ENCODE measurements at regions of chr14 and their contacts with region 1.

Region 1: GRCh38 chr14:35416108-35416750 is 11.7 kb upstream of the NFKBIA start:
- DNase-seq: peak in 8 of 9 experiments; percentile 35 to 94 (median 62)
- ATAC-seq: peak; percentile 48
- H3K4me3 ChIP-seq: peak overlapping the region; percentile 9 to 15
- H3K4me3 Mint-ChIP-seq: peak overlapping the region; percentile 55
- H3K27ac ChIP-seq: peak overlapping the region; percentile 17 to 85
- H3K27ac Mint-ChIP-seq: peak overlapping the region; percentile 90
- H3K4me1 ChIP-seq: peaks cover 35% of the 10 kb centered on the region
- H3K4me1 Mint-ChIP-seq: peaks cover 44% of the 10 kb centered on the region
- H3K27me3 ChIP-seq: no peaks in the 10 kb centered on the region
- H3K27me3 Mint-ChIP-seq: no peaks in the 10 kb centered on the region
- CTCF ChIP-seq: no peak

Region 2: DNA sequence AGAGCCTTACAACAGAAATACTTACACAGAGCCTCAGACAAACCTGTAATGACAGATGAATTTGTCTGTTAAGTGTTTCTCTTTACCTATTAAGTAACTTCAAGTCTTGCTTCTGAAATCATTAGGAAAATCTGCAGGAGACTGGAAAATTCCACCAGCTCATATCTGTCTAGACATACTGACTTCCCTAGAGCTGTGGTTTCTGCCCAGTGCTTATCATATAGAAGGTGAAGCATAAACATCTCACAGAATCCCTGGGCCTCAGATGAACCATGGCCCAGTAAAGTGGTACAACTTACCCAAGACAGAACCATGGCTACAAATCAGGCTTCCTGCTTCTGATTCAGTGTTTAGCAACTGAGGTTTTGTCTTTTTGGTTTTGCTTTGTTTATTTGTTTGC is 1556.9 kb before region 1 on chr14:
- CTCF ChIA-PET with region 1: no interaction called
- POLR2A ChIA-PET with region 1: no interaction called
- intact Hi-C with region 1: no loop called
- DNase-seq: no peak
- ATAC-seq: no peak
- H3K4me3 ChIP-seq: no peak overlapping the region
- H3K4me3 Mint-ChIP-seq: no peak overlapping the region
- H3K27ac ChIP-seq: no peak overlapping the region
- H3K27ac Mint-ChIP-seq: no peak overlapping the region
- H3K4me1 ChIP-seq: no peaks in the 10 kb centered on the region
- H3K4me1 Mint-ChIP-seq: no peaks in the 10 kb centered on the region
- H3K27me3 ChIP-seq: no peaks in the 10 kb centered on the region
- H3K27me3 Mint-ChIP-seq: no peaks in the 10 kb centered on the region
- CTCF ChIP-seq: no peak

Region 3: GRCh38 chr14:34331728-34332623 is 1084.3 kb before region 1 on chr14:
- CTCF ChIA-PET with region 1: interaction called, 3 read pairs
- POLR2A ChIA-PET with region 1: no interaction called
- intact Hi-C with region 1: loop called (anchors 5 kb)
- DNase-seq: peak; percentile 29 to 68 (median 48)
- ATAC-seq: peak; percentile 64
- H3K4me3 ChIP-seq: no peak overlapping the region
- H3K4me3 Mint-ChIP-seq: no peak overlapping the region
- H3K27ac ChIP-seq: no peak overlapping the region
- H3K27ac Mint-ChIP-seq: no peak overlapping the region
- H3K4me1 ChIP-seq: no peaks in the 10 kb centered on the region
- H3K4me1 Mint-ChIP-seq: peaks cover 10% of the 10 kb centered on the region
- H3K27me3 ChIP-seq: no peaks in the 10 kb centered on the region
- H3K27me3 Mint-ChIP-seq: no peaks in the 10 kb centered on the region
- CTCF ChIP-seq: peak; percentile 64

Region 4: GRCh38 chr14:34722717-34723545 is 693.3 kb before region 1 on chr14:
- CTCF ChIA-PET with region 1: no interaction called
- POLR2A ChIA-PET with region 1: no interaction called
- intact Hi-C with region 1: loop called in 1 of 2 experiments (anchors 5 kb)
- DNase-seq: peak in 7 of 9 experiments; percentile 16 to 69 (median 34)
- ATAC-seq: peak; percentile 62
- H3K4me3 ChIP-seq: no peak overlapping the region
- H3K4me3 Mint-ChIP-seq: no peak overlapping the region
- H3K27ac ChIP-seq: no peak overlapping the region
- H3K27ac Mint-ChIP-seq: no peak overlapping the region
- H3K4me1 ChIP-seq: no peaks in the 10 kb centered on the region
- H3K4me1 Mint-ChIP-seq: peaks cover 2% of the 10 kb centered on the region
- H3K27me3 ChIP-seq: no peaks in the 10 kb centered on the region
- H3K27me3 Mint-ChIP-seq: peaks cover 2% of the 10 kb centered on the region
- CTCF ChIP-seq: peak; percentile 72

Region 5: DNA sequence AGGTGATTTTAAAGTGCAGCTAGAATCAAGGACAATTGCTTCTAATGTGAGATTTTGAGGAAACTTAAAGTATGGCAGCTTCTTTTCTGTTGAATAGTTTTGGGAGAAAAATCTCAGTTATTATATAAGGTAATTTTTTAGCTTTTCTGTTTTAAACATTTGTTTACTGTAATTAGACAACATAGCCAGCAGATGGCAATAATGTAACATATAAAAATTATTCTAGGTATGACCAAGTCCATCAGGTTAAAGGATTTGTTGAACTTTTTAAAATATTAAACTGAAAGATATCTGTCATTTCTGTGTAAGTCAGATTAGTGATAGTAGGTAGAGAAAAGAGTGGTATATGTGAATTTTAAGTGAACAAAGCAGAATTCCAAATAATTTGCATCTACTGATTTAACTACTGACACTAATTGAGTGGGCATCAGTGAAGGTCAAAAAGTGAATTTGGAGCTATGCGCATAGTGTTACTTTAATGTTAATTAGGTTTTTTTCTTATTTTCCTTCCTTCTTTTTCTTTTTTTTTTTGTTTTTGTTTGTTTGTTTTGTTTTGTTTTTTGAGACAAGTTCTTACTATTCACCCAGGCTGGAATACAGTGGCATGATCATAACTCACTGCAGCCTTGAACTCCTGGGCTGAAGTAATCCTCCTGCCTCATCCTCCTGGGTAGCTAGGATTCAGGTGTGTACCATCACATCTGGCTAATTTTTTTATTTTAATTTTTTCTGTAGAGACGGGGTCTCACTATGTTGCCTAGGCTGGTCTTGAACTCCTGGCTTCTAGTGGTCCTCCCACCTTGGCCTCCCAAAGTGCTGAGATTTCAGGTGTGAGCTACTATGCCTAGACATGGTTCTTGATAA is 275.3 kb before region 1 on chr14:
- CTCF ChIA-PET with region 1: interaction called, 382 read pairs
- POLR2A ChIA-PET with region 1: no interaction called
- intact Hi-C with region 1: loop called (anchors 1 to 2 kb)
- DNase-seq: peak in 2 of 9 experiments; percentile 40 to 44
- ATAC-seq: peak; percentile 67
- H3K4me3 ChIP-seq: no peak overlapping the region
- H3K4me3 Mint-ChIP-seq: no peak overlapping the region
- H3K27ac ChIP-seq: no peak overlapping the region
- H3K27ac Mint-ChIP-seq: peak overlapping the region; percentile 67
- H3K4me1 ChIP-seq: no peaks in the 10 kb centered on the region
- H3K4me1 Mint-ChIP-seq: peaks cover 19% of the 10 kb centered on the region
- H3K27me3 ChIP-seq: no peaks in the 10 kb centered on the region
- H3K27me3 Mint-ChIP-seq: no peaks in the 10 kb centered on the region
- CTCF ChIP-seq: peak; percentile 83

Region 6: GRCh38 chr14:35261774-35262173 is 154.5 kb before region 1 on chr14:
- CTCF ChIA-PET with region 1: interaction called, 12 read pairs
- POLR2A ChIA-PET with region 1: no interaction called
- intact Hi-C with region 1: loop called in 1 of 2 experiments (anchors 2 kb)
- DNase-seq: peak in 2 of 9 experiments; percentile 39 to 53
- ATAC-seq: no peak
- H3K4me3 ChIP-seq: no peak overlapping the region
- H3K4me3 Mint-ChIP-seq: no peak overlapping the region
- H3K27ac ChIP-seq: no peak overlapping the region
- H3K27ac Mint-ChIP-seq: peak overlapping the region; percentile 18
- H3K4me1 ChIP-seq: no peaks in the 10 kb centered on the region
- H3K4me1 Mint-ChIP-seq: no peaks in the 10 kb centered on the region
- H3K27me3 ChIP-seq: no peaks in the 10 kb centered on the region
- H3K27me3 Mint-ChIP-seq: no peaks in the 10 kb centered on the region
- CTCF ChIP-seq: no peak